Left ventricle myocardium superior (tissue), 1 donor: ENCODE measurements at regions of chr22 and their contacts with region 1.

Region 1: DNA sequence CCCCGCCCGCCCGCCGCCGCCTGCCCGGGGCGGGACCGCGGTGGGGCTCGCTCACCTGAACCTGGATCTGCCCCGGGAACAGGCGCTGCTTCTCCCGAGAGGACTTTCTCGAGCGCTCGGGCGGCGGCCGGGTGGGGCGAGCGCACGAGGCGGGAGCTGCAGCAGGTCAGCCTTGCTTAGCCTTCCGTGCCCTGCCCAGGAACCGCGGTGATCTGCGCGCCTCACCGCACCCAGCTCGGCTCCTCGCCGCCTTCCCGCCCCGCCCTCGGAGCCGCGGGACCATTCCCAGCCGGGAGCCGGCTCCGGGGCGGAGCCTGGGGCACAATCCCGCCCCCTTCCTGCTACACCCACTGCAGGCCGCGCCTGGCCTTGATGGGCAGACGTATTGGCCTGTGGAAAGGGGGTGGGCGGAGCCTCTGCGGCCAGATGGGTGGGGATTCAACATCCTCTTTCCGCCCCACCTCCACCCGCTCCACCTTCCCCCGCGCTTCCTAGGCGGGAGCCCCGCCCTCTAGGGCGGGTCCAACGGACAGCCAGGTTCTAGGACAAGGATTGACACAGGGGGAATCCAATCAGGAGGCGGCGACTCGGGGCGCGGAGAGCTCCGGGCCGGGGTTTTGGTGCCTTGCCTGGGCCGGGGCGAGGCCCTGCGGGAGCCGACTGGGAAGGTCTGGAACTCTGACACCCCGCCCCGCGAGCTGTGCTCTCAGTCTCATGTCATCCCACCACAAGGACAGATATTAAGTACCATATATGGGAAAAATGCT is at the start of gene MYH9:
- DNase-seq: peak; percentile 100
- ATAC-seq: peak; percentile 92
- total RNA-seq, gene MYH9: 161 TPM

Region 2: DNA sequence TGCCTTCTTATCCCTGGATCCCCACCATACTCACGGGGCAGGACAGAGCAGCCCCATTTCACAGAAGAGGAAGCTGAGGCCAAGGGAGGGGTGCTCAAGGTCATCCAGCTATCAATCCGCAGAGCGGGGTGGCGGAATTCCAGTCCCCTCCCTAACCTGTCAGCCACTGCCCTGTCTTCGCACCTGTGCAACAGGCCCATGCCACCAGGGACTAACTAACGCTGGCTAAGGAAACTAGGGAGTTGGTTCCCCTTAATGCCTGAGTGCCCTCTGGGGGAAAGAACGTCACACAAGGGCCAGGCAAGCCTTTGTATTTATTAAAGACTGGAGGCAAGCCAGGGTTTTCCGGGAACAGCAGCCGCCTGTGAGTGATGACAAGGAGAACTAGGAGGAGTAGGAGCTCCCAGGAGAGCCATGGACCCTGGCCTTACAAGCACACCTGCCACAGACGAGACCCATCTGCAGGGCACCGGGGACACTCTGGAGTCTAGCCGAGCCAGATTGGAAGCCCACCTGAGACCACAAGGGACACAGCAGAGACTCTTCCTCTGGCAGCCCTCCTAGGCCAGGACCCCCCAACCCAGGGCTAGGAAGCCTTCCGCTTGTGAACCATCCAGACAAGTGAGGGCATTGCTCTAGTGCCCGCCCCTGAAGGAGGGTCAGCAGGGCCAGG is 64.6 kb before region 1 on chr22:
- intact Hi-C with region 1: loop called (anchors 5 kb)
- DNase-seq: peak; percentile 74
- ATAC-seq: peak; percentile 62

Region 3: DNA sequence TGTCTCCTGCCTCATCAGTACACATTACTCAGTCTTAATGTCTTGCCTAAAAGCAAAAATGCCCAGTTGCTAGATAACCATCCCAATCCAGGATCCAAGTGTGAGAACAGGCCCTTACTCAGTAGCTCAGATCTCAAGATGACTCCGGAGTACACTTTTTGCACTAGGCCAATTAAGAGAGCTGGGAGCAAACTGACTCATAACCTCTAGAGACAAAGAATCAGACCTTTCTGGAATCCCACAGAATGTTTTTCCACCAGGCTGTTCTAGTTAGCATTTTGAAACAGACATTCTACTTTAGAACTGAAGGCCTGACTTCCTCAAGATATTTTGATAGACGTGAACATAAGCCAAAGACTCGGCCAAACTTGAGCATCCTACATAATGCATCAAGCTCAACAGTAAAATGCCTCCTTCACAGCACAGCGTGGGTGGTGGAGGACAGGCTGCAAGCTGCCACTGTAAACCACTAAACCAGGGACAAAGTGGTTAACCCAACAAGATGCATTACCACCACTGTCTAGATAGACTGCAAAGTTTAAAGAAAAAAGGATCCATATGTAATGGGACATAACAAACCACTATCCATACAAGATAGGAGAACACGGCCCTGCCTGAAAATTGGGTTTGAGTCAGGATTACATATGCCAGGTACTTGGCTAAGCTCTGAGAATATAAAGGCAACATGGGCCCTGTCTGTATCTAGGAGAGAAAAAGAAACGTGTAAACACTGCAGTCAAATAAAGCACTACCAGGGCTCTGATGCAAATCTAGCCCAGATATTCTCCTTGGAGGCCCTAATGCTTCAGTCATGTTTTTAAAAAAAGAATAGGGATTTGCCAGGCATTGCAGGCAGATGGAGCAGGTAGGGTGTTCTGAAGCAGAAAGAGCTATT is 48.5 kb before region 1 on chr22:
- intact Hi-C with region 1: loop called (anchors 5 kb)
- DNase-seq: no peak
- ATAC-seq: peak; percentile 3

Region 4: DNA sequence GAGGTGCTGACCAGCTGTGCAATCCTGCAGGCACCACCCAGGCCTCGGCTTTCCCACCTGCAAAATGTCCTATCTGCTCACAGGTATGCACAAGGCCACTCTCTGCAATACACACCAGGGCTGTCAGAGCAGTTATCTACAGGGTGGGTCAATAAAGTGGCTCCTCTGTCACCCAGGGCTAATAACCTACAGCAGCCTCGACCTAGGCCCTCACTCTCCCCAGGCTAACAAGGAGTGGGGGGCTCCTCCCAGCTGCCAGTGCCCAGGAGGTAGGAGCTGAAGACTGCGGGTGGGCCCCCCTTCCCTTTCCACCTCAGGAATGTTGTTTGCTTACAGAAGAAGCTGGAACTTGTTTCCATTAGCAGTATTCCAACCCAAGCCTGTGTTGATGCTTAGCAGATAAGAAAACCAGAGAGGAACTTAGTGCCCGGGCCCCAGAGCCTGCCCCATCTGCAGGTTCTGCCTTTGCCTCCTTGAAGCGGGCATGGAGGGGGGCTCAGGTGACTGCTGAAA is 27.0 kb before region 1 on chr22:
- intact Hi-C with region 1: loop called (anchors 1 kb)
- DNase-seq: no peak
- ATAC-seq: no peak

Region 5: DNA sequence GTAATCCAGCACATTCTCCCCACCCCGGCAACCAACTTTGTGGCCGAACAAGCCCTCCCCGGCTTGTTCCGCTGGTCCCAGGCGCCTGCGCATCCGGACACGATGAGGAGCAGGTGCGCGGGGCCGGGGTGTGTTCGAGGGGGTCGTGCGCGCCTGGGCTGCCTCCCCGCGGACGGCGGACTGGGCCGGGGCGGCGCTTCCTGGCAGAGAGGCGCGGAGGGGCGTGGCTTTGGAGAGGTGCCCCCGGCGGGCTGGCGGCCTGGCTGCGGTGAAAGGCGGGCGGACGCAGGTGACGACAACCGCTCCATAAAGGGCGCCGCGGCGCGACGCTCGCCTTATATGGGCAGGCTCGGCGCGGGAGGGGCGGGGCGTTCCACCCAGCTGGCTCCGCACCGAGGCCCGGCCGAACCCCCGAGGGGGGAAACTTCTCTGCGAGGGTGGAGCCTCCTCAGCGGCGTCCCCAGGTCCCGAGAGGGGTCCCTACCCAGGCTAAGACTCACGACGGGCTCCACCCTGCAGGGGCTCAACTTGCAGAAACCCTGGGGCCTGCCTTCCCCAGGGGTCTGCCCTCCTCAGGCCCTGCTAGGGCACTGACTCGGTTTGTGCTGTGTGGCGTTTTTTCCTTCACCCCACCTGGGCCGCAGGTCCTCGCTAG is 67.1 kb after region 1 on chr22:
- intact Hi-C with region 1: loop called (anchors 10 kb)
- DNase-seq: peak; percentile 97
- ATAC-seq: peak; percentile 89